ENCODE measurements at regions of chr6 and their contacts with region 1.

Region 1: GRCh38 chr6:154446984-154447383 is 63.5 kb downstream of the CNKSR3 start:
- DNase-seq: no peak
- ATAC-seq: no peak
- H3K4me3 ChIP-seq: no peak overlapping the region
- H3K27ac ChIP-seq: no peak overlapping the region
- H3K4me1 ChIP-seq: no peaks in the 10 kb centered on the region
- CTCF ChIP-seq: no peak
- EP300 ChIP-seq: no peak
- POLR2A ChIP-seq: no peak
- RAD21 ChIP-seq: no peak

Region 2: GRCh38 chr6:154229786-154230185 is 217.2 kb before region 1 on chr6:
- CTCF ChIA-PET with region 1: no interaction called
- POLR2A ChIA-PET with region 1: no interaction called
- DNase-seq: no peak
- ATAC-seq: no peak
- H3K4me3 ChIP-seq: no peak overlapping the region
- H3K27ac ChIP-seq: no peak overlapping the region
- H3K4me1 ChIP-seq: no peaks in the 10 kb centered on the region
- CTCF ChIP-seq: no peak
- EP300 ChIP-seq: no peak
- POLR2A ChIP-seq: no peak
- RAD21 ChIP-seq: no peak

Region 3: DNA sequence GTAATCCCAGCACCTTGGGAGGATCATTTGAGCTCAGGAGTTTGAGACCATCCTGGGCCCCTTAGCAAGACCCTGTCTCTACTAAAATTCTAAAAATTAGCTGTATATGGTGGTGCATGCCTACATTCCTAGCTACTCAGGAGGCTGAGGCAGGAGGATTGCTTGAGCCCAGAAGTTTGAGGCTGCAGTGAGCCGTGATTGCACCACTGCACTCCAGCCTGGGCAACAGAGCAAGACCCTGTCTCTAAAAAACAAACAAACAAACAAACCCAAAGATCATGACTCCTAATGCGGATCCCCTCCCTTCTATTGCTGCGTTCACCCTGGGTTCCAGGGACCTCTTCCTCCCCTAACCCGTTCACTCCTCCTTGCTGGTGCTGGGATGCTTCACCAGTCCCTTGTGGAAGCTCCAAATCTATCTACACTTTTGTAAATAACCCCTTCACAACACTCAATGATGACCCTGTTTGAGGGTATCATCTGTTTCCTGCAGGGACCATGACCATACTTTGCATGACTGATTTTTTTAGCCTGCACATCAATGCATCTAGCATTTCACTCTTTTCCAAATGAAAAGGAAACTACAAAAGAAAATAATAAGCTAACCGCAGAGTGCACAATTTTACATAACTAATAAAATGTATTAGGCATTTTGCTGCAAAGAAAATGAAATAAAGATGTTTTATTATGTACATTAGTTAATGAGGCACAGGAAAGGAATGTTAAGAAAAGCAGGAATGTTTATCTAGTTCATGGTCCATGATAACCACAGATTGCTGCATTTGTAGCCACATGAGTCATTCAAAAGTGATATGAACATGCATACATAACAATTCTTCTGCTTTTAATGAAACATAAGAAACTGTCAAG is 59.9 kb before region 1 on chr6:
- CTCF ChIA-PET with region 1: no interaction called
- POLR2A ChIA-PET with region 1: no interaction called
- DNase-seq: peak in 1 of 2 experiments; percentile 64
- ATAC-seq: peak; percentile 70 to 92
- H3K4me3 ChIP-seq: no peak overlapping the region
- H3K27ac ChIP-seq: peak overlapping the region; percentile 44 to 77; a peak in 4 of 6 replicates
- H3K4me1 ChIP-seq: peaks cover 17% of the 10 kb centered on the region
- CTCF ChIP-seq: no peak
- EP300 ChIP-seq: no peak
- POLR2A ChIP-seq: no peak
- RAD21 ChIP-seq: no peak

Region 4: GRCh38 chr6:154457881-154458284 is 10.9 kb after region 1 on chr6:
- CTCF ChIA-PET with region 1: interaction called, 11 read pairs
- POLR2A ChIA-PET with region 1: no interaction called
- DNase-seq: no peak
- ATAC-seq: no peak
- H3K4me3 ChIP-seq: no peak overlapping the region
- H3K27ac ChIP-seq: no peak overlapping the region
- H3K4me1 ChIP-seq: peaks cover 17% of the 10 kb centered on the region
- CTCF ChIP-seq: no peak
- EP300 ChIP-seq: no peak
- POLR2A ChIP-seq: no peak
- RAD21 ChIP-seq: no peak; a peak in 1 of 5 replicates

Measured in A549 (cell line).